ENCODE measurements at regions of chr5 and their contacts with region 1.

Region 1: GRCh38 chr5:170338933-170339779 is 41.6 kb upstream of the LCP2 start:
- DNase-seq: no peak
- ATAC-seq: peak; percentile 95
- H3K4me3 ChIP-seq: no peak overlapping the region
- H3K27ac ChIP-seq: no peak overlapping the region
- H3K4me1 ChIP-seq: peaks cover 13% of the 10 kb centered on the region
- H3K27me3 ChIP-seq: no peaks in the 10 kb centered on the region
- CTCF ChIP-seq: peak; percentile 95 to 100 (median 97); a peak in 5 of 6 replicates
- EP300 ChIP-seq: no peak
- POLR2A ChIP-seq: no peak
- RAD21 ChIP-seq: peak; percentile 98

Region 2: GRCh38 chr5:170100066-170100943 is 238.9 kb before region 1 on chr5:
- CTCF ChIA-PET with region 1: interaction called, 4 read pairs
- POLR2A ChIA-PET with region 1: no interaction called
- RAD21 ChIA-PET with region 1: interaction called, 3 read pairs
- SMC1A ChIA-PET with region 1: interaction called, 5 read pairs
- in situ Hi-C with region 1: no loop called
- intact Hi-C with region 1: loop called (anchors 10 kb)
- DNase-seq: peak; percentile 8
- ATAC-seq: peak; percentile 86
- H3K4me3 ChIP-seq: no peak overlapping the region
- H3K27ac ChIP-seq: no peak overlapping the region
- H3K4me1 ChIP-seq: no peaks in the 10 kb centered on the region
- H3K27me3 ChIP-seq: no peaks in the 10 kb centered on the region
- CTCF ChIP-seq: peak; percentile 56 to 71 (median 60)
- EP300 ChIP-seq: no peak
- POLR2A ChIP-seq: no peak
- RAD21 ChIP-seq: peak; percentile 88

Region 3: DNA sequence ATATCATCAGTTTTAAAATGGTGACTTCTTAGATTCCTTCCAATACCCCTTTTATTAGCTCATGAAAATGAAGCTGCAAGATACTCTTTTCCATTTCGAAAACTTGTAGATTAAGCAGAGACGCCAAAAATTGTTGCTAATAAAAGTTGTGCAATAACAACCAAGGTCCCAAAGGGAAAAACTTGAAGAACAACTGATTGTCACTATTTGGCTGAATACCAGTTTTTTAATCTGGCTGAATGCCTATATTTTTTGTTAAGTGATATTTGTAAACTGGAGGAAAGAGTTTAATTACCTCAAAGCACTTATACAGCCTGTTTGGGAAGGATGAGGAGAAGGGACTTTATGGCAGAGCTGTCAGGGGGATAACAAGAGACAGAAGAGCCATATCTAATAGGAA is 91.8 kb before region 1 on chr5:
- CTCF ChIA-PET with region 1: interaction called, 15 read pairs
- POLR2A ChIA-PET with region 1: no interaction called
- RAD21 ChIA-PET with region 1: no interaction called
- SMC1A ChIA-PET with region 1: interaction called, 4 read pairs
- in situ Hi-C with region 1: no loop called
- intact Hi-C with region 1: no loop called
- DNase-seq: no peak
- ATAC-seq: no peak
- H3K4me3 ChIP-seq: no peak overlapping the region
- H3K27ac ChIP-seq: no peak overlapping the region
- H3K4me1 ChIP-seq: no peaks in the 10 kb centered on the region
- H3K27me3 ChIP-seq: no peaks in the 10 kb centered on the region
- CTCF ChIP-seq: no peak
- EP300 ChIP-seq: no peak
- POLR2A ChIP-seq: no peak
- RAD21 ChIP-seq: no peak

Region 4: DNA sequence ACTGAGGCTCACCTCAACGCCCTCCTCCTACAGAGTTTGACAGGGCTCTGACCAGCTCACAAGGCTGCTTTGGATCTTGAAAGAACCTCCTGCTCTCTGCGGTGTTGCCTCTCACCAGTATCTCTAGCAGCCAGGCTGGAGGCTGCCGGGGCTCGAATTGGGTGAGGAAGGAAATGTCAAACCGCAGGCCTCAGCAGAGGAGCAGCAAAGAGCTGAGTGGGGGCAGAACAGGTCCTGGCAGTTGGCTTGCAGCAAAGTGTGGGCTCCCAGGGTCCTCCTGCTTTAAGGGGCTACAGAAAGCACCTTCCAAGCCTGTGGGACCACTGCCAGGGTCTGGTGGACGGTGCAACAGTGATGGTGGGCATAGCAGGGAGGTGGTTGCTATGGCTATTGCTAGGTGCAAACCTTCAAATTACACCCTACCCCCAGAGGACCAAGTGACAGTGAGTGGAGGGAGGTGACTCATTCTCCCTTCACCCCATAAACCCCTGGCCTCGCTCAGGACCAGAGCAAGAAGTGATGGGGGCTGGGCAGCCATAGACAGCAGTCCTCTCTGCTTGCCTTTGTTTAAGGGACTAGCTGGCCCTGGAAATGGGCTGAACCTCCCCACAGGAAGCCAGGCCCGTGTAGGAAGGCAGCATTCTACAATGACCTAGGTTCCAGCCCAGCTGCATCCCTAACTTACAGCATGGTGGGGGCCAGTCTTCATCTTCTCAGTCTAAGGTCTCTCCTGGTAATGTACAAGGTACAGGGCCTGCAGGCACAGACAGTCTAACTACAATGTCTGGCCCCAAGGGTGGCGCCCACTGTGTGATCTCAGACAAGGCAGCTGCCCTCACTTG is 60.3 kb before region 1 on chr5:
- CTCF ChIA-PET with region 1: interaction called, 126 read pairs
- POLR2A ChIA-PET with region 1: interaction called, 6 read pairs
- RAD21 ChIA-PET with region 1: interaction called, 81 read pairs
- SMC1A ChIA-PET with region 1: interaction called, 125 read pairs
- in situ Hi-C with region 1: loop called (anchors 5 kb)
- intact Hi-C with region 1: no loop called
- DNase-seq: peak; percentile 78
- ATAC-seq: peak; percentile 86
- H3K4me3 ChIP-seq: peak overlapping the region; percentile 2; the same call in 1 of the 2 replicates
- H3K27ac ChIP-seq: peak overlapping the region; percentile 91
- H3K4me1 ChIP-seq: peaks cover 36% of the 10 kb centered on the region
- H3K27me3 ChIP-seq: no peaks in the 10 kb centered on the region
- CTCF ChIP-seq: no peak
- EP300 ChIP-seq: 0 out of 4 replicates have a peak, but pooled peaks of 1 of the 2 experiments have one; percentile 13
- POLR2A ChIP-seq: peak; percentile 56; the same call in 1 of the 2 replicates
- RAD21 ChIP-seq: peak; percentile 27; the same call in 1 of the 2 replicates

Region 5: DNA sequence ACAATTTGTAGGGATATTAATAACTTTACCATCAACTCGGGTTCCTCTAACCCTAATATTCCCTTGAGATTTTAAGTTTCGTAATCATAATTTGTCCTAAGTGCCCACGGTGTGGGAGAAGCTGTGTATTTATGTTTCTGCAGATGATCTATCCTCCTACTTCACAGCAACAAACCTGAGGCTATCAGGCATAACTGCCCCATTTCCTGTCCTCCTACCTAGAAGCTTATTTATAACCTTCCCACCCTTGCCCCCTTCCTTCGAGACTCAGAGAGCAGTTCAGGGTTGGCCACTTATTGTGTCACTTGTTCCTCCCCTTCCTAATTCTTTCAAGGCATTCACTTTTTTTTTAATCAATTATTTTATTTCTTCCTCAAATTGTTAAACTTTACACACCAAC is 12.0 kb before region 1 on chr5:
- CTCF ChIA-PET with region 1: interaction called, 20 read pairs
- POLR2A ChIA-PET with region 1: interaction called, 7 read pairs
- RAD21 ChIA-PET with region 1: interaction called, 39 read pairs
- SMC1A ChIA-PET with region 1: interaction called, 16 read pairs
- in situ Hi-C with region 1: no loop called
- intact Hi-C with region 1: no loop called
- DNase-seq: no peak
- ATAC-seq: peak; percentile 50
- H3K4me3 ChIP-seq: peak overlapping the region; percentile 33; the same call in 1 of the 2 replicates
- H3K27ac ChIP-seq: peak overlapping the region; percentile 1; the same call in 1 of the 2 replicates
- H3K4me1 ChIP-seq: peaks cover 36% of the 10 kb centered on the region
- H3K27me3 ChIP-seq: no peaks in the 10 kb centered on the region
- CTCF ChIP-seq: no peak
- EP300 ChIP-seq: no peak
- POLR2A ChIP-seq: no peak
- RAD21 ChIP-seq: no peak

Region 6: GRCh38 chr5:170429014-170429413 is 89.9 kb after region 1 on chr5:
- CTCF ChIA-PET with region 1: interaction called, 25 read pairs
- POLR2A ChIA-PET with region 1: no interaction called
- RAD21 ChIA-PET with region 1: no interaction called
- SMC1A ChIA-PET with region 1: interaction called, 3 read pairs
- in situ Hi-C with region 1: no loop called
- intact Hi-C with region 1: no loop called
- DNase-seq: no peak
- ATAC-seq: no peak
- H3K4me3 ChIP-seq: no peak overlapping the region
- H3K27ac ChIP-seq: no peak overlapping the region
- H3K4me1 ChIP-seq: no peaks in the 10 kb centered on the region
- H3K27me3 ChIP-seq: peaks cover 0 to 2% of the 10 kb centered on the region in 2 experiments; a peak in 2 of 4 replicates
- CTCF ChIP-seq: no peak
- EP300 ChIP-seq: no peak
- POLR2A ChIP-seq: no peak
- RAD21 ChIP-seq: no peak

Region 7: GRCh38 chr5:170522211-170523133 is 183.3 kb after region 1 on chr5:
- CTCF ChIA-PET with region 1: no interaction called
- POLR2A ChIA-PET with region 1: no interaction called
- RAD21 ChIA-PET with region 1: no interaction called
- SMC1A ChIA-PET with region 1: no interaction called
- in situ Hi-C with region 1: no loop called
- intact Hi-C with region 1: no loop called
- DNase-seq: no peak
- ATAC-seq: no peak
- H3K4me3 ChIP-seq: no peak overlapping the region
- H3K27ac ChIP-seq: no peak overlapping the region
- H3K4me1 ChIP-seq: no peaks in the 10 kb centered on the region
- H3K27me3 ChIP-seq: no peaks in the 10 kb centered on the region; a peak in 2 of 4 replicates
- CTCF ChIP-seq: no peak
- EP300 ChIP-seq: no peak
- POLR2A ChIP-seq: no peak
- RAD21 ChIP-seq: no peak

Measured in GM12878 (cell line).